Ovary (tissue), 10 donors: ENCODE measurements at regions of chr2 and their contacts with region 1.

Region 1: GRCh38 chr2:209984291-209984690 is 18.1 kb upstream of the RPE start:
- DNase-seq: no peak
- H3K4me3 ChIP-seq: no peak overlapping the region
- H3K27ac ChIP-seq: no peak overlapping the region
- H3K4me1 ChIP-seq: no peaks in the 10 kb centered on the region
- H3K27me3 ChIP-seq: no peaks in the 10 kb centered on the region
- CTCF ChIP-seq: no peak
- EP300 ChIP-seq: no peak
- POLR2A ChIP-seq: no peak

Region 2: DNA sequence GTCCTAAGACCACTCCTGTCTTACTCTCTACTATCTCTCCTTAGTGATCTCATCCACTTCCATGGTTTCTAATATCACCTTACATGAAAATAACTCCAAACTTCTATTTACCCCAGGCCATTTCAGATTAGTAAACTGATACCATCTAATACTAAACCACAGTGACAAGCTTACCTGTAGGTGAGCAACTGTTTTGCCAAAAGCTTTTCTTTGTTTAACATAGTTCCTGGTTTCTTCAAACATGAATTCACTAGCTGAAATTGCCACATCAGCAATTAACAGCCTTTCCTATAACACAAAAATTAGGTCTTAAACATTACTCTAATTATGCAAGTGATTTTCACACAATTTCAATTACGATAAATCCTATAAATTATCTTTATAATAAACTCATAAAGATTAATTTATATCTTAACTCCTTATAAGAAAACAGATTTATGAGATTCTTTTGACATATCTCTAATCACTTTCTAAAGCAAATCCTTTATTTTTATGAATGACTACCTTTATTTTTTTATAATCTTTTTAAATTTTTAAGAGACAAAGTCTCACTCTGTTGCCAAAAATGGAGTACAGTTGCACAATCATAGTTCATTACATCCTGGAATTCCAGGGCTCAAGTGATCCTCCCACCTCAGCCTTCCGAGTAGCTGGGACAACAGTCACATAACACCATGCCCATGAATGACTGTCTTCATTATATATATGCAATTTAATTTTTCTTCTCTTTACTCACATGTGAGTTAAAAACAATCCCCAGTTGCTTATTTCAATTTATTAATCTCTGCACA is 219.1 kb after region 1 on chr2:
- intact Hi-C with region 1: loop called (anchors 5 kb)
- DNase-seq: no peak
- H3K4me3 ChIP-seq: no peak overlapping the region
- H3K27ac ChIP-seq: no peak overlapping the region
- H3K4me1 ChIP-seq: no peaks in the 10 kb centered on the region
- H3K27me3 ChIP-seq: no peaks in the 10 kb centered on the region
- CTCF ChIP-seq: no peak
- EP300 ChIP-seq: no peak
- POLR2A ChIP-seq: no peak